Gastrocnemius medialis (tissue), 4 donors: ENCODE measurements at regions of chr5 and their contacts with region 1.

Region 1: DNA sequence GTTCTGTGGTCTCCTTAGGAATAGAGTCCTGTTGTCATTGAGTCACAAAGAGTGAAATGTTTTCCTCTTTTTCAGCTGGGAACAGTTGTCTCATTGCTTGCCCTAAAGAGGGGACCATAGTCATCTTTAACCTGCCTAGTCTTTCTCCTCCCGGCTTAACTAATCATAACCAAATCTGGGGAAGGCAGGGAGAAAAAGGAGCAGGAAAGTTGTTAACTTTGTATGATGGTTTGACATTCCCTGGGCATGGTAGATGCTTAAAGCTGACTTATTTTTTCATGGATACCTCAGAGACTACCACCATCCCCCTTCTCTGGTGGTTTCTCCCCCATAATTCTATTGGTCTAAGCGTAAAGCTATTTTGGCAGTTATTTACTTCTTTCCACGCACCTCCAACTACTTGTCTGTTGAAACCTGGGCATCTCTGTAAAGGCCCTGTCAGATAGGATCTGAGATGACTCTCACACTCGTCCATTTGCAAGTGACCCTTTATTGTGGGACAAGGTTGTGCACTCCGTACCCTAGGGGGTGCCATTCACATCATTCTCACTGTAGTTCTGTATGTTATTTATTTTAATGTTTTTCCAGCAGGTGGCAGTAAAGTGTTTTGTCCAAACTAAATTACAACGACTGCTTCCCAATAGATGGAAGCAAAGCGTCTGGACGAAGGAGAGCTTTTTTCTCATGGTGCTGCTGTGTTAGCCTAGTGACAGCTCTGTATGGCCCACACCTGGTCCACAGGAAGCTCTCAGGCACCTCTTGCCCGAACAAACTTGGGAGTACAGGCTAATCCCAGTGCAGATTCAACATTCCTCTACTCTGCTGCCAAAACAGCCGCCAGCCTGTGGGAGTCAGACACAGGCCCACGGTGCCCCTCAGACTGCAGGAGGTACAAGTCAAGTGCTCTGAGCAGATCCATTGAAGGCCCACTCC is 3.0 kb upstream of the FAM13B start:
- DNase-seq: peak; percentile 23 to 64
- ATAC-seq: peak; percentile 63 to 78
- H3K4me3 ChIP-seq: no peak overlapping the region
- H3K27ac ChIP-seq: peak overlapping the region in 2 of 4 donors; percentile 36 to 58
- H3K4me1 ChIP-seq: peaks cover 20 to 25% of the 10 kb centered on the region in 2 donors
- H3K27me3 ChIP-seq: no peaks in the 10 kb centered on the region
- CTCF ChIP-seq: peak; percentile 71 to 86 (median 79)
- POLR2A ChIP-seq: no peak

Region 2: DNA sequence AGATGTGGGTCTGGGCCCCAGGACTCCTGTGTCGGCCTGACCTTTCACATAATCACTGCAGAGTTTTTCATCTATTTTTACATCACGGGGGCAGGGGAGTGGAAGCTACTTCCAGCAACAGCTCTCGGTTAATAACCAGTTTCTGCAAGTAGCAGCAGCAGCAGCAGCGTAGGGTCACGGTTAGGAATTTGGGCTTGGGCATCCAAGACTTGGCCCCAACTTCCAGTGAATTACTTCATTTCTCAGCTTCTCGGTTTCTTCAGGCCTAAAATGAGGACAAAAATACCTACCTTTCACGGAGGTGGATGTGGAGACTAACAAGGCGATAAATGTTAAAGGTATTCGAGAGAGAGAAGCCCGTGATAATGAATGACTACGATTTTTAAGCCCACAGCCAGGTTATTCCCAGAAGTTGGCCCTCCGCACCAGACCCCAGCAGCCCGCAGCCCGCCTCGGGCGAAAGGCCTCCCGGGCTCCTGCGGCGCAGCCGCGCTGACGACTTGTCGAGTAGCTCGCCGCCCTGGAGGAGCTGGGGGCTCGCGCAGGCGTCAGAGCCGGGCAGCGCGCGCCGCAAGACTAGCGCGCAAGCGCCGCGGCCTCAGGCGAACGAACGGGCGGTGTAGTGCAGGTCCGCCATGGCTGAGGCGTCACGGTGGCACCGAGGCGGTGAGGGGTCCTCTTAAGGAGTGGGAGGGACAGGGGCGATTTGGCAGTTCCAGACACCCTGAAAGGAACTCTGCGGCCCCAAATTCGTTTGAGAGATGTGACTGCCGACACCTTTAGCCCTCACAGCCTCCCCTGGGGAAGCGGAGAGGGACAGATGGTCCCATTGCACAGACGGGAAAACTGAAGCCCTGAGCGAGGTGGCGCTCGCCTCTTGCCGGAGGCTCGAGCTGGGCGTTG is 146.8 kb before region 1 on chr5 and contains the start of gene PKD2L2:
- in situ Hi-C with region 1: no loop called
- intact Hi-C with region 1: loop called (anchors 5 kb)
- DNase-seq: peak; percentile 50 to 82
- ATAC-seq: peak; percentile 42 to 66
- H3K4me3 ChIP-seq: peak within 1 kb of the TSS; percentile 43 to 51 (median 46)
- H3K27ac ChIP-seq: peak within 1 kb of the TSS; percentile 88 to 97 (median 92)
- H3K4me1 ChIP-seq: peaks cover 10 to 40% of the 10 kb centered on the region in 2 donors
- H3K27me3 ChIP-seq: no peaks in the 10 kb centered on the region
- CTCF ChIP-seq: no peak
- POLR2A ChIP-seq: peak; percentile 41 to 50
- total RNA-seq, gene PKD2L2: 0.70 to 4.8 (median 0.94) TPM in 3 of 4 donors, not detected in the other

Region 3: GRCh38 chr5:137997726-137998213 is 38.1 kb before region 1 on chr5:
- in situ Hi-C with region 1: no loop called
- intact Hi-C with region 1: no loop called
- DNase-seq: no peak
- ATAC-seq: no peak
- H3K4me3 ChIP-seq: no peak overlapping the region
- H3K27ac ChIP-seq: no peak overlapping the region
- H3K4me1 ChIP-seq: peaks cover 6 to 24% of the 10 kb centered on the region in 2 donors
- H3K27me3 ChIP-seq: no peaks in the 10 kb centered on the region
- CTCF ChIP-seq: no peak
- POLR2A ChIP-seq: no peak

Region 4: DNA sequence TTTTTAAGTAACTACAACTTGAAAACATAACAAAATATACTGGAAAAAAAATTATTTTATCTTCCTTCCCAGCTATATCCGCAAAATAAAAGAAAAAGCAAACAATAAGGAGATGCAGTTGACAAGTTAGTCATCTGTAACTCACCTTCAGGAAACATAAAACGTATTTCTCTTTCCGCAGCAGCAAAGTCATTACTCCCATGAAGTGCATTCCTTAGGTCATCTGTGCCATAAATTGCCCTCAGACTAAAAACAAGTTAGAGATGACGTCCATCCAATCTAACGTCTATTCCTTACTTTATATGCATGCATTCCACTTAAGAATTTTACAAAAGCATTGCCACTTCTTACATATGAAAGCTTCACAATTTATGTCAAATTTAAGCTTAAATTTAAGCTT is 92.5 kb after region 1 on chr5:
- in situ Hi-C with region 1: loop called in 1 of 4 experiments (anchors 25 kb)
- intact Hi-C with region 1: loop called (anchors 1 kb)
- DNase-seq: no peak
- ATAC-seq: no peak
- H3K4me3 ChIP-seq: no peak overlapping the region
- H3K27ac ChIP-seq: no peak overlapping the region
- H3K4me1 ChIP-seq: no peaks in the 10 kb centered on the region
- H3K27me3 ChIP-seq: no peaks in the 10 kb centered on the region
- CTCF ChIP-seq: no peak
- POLR2A ChIP-seq: no peak

Region 5: GRCh38 chr5:138178516-138179276 is 142.8 kb after region 1 on chr5 and contains the starts of genes BRD8 and KIF20A:
- in situ Hi-C with region 1: no loop called
- intact Hi-C with region 1: loop called (anchors 2 kb)
- DNase-seq: peak; percentile 95 to 98
- ATAC-seq: peak; percentile 99
- H3K4me3 ChIP-seq: peak within 1 kb of the TSS; percentile 80 to 95 (median 92)
- H3K27ac ChIP-seq: peak within 1 kb of the TSS; percentile 88 to 96 (median 95)
- H3K4me1 ChIP-seq: peaks cover 17 to 19% of the 10 kb centered on the region in 2 donors
- H3K27me3 ChIP-seq: no peaks in the 10 kb centered on the region
- CTCF ChIP-seq: no peak
- POLR2A ChIP-seq: peak in 1 of 2 donors; percentile 48
- total RNA-seq, gene BRD8: 20.2 to 28.0 (median 24.1) TPM
- total RNA-seq, gene KIF20A: 0.75 to 0.89 TPM in 2 of 4 donors, not detected in the others